IMR-90 (cell line): ENCODE measurements at regions of chr15 and their contacts with region 1.

Region 1: GRCh38 chr15:82999905-83000671 is 11.4 kb downstream of the C15orf40 start:
- DNase-seq: peak; percentile 69
- ATAC-seq: peak; percentile 90
- H3K4me3 ChIP-seq: peak overlapping the region; percentile 24; the same call in 1 of the 2 replicates
- H3K27ac ChIP-seq: peak overlapping the region; percentile 48
- H3K4me1 ChIP-seq: peaks cover 2% of the 10 kb centered on the region; the same call in 1 of the 2 replicates
- H3K27me3 ChIP-seq: no peaks in the 10 kb centered on the region
- CTCF ChIP-seq: peak; percentile 66
- POLR2A ChIP-seq: no peak
- RAD21 ChIP-seq: peak; percentile 80

Region 2: GRCh38 chr15:82530606-82531379 is 469.3 kb before region 1 on chr15:
- CTCF ChIA-PET with region 1: no interaction called
- POLR2A ChIA-PET with region 1: no interaction called
- dilution Hi-C with region 1: no loop called
- in situ Hi-C with region 1: loop called (anchors 10 kb)
- intact Hi-C with region 1: no loop called
- DNase-seq: peak; percentile 56
- ATAC-seq: peak; percentile 98
- H3K4me3 ChIP-seq: no peak overlapping the region
- H3K27ac ChIP-seq: no peak overlapping the region
- H3K4me1 ChIP-seq: no peaks in the 10 kb centered on the region; the same call in 1 of the 2 replicates
- H3K27me3 ChIP-seq: no peaks in the 10 kb centered on the region
- CTCF ChIP-seq: peak; percentile 52
- POLR2A ChIP-seq: no peak
- RAD21 ChIP-seq: 0 out of 2 replicates have a peak, but pooled peaks have one; percentile 31

Region 3: DNA sequence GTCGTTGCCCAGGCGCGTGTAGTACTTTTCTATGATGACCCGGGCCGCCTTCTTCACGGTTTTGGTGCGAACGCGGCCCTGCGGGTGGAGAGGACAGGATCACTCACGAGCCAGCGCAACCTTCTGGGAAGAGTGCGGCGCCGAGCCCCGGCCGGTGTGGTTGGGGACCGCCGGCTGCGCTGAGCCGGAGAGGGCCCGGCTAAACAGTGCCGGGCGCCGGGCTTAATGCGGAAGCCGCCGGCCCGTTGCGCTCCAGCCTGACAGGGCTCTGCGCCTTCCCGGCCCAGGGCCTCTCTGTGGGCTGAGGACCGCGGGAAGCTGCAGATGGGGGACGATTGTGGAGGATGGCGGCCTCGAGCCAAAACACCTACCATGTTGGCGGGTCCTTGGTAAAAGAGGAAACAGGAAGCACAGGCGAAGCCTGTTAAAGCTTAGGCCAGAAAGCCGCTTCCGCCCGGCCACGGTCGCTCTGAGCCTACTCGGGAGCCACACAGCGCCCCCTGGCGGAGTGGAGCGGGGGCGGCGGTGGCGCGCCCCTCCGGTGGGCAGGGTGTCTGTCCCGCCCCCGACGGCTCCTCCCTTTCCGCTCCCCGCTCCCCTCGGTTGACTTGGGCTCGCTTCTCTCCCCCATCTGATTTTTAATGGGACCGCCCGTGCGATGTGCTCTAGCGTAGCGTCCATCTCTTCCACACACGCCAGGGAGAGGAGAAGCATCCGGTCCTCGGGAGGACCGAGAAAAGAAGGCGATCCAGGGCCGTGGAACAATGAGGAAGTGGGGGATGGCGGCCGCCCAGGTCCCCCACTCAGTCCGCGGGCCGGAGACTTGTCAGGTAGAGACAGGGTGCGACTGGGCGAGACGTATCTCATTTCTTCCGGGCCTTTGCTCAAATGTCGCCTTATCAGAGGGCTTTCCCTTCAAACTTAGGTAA is 459.8 kb before region 1 on chr15 and contains the start of gene RPS17:
- CTCF ChIA-PET with region 1: no interaction called
- POLR2A ChIA-PET with region 1: interaction called, 3 read pairs
- dilution Hi-C with region 1: no loop called
- in situ Hi-C with region 1: loop called (anchors 10 kb)
- intact Hi-C with region 1: loop called (anchors 2 kb)
- DNase-seq: peak; percentile 93
- ATAC-seq: peak; percentile 95
- H3K4me3 ChIP-seq: peak within 1 kb of the TSS; percentile 99
- H3K27ac ChIP-seq: peak within 1 kb of the TSS; percentile 89
- H3K4me1 ChIP-seq: peaks cover 6% of the 10 kb centered on the region
- H3K27me3 ChIP-seq: no peaks in the 10 kb centered on the region
- CTCF ChIP-seq: peak; percentile 99
- POLR2A ChIP-seq: peak; percentile 99
- RAD21 ChIP-seq: peak; percentile 43
- total RNA-seq, gene RPS17: 2,617 and 3,477 TPM in 2 replicates

Region 4: DNA sequence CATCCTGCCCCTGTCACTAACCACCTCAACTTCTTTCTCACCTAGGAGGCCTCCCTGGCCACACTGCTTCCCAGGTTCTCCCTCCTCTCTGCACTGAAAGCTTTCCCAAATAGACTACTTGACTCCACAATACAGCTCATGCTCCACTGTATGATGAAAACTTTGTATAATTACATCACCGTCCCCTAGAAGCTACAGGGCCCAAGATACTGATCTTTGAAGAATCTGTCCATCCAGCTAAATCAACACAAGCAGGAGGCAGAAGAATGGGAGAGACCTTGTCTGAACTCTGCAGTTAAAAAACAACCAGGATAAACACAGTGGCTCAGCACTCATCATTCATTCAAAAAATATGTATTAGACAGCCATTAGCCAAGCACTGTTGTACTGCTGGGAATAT is 433.4 kb before region 1 on chr15:
- CTCF ChIA-PET with region 1: no interaction called
- POLR2A ChIA-PET with region 1: no interaction called
- dilution Hi-C with region 1: no loop called
- in situ Hi-C with region 1: loop called (anchors 10 kb)
- intact Hi-C with region 1: no loop called
- DNase-seq: peak; percentile 81
- ATAC-seq: peak; percentile 35
- H3K4me3 ChIP-seq: no peak overlapping the region
- H3K27ac ChIP-seq: no peak overlapping the region
- H3K4me1 ChIP-seq: peaks cover 9% of the 10 kb centered on the region
- H3K27me3 ChIP-seq: no peaks in the 10 kb centered on the region
- CTCF ChIP-seq: no peak
- POLR2A ChIP-seq: no peak
- RAD21 ChIP-seq: no peak

Region 5: GRCh38 chr15:82647045-82647834 is 352.8 kb before region 1 on chr15 and contains the start of gene CPEB1:
- CTCF ChIA-PET with region 1: no interaction called
- POLR2A ChIA-PET with region 1: no interaction called
- dilution Hi-C with region 1: no loop called
- in situ Hi-C with region 1: no loop called
- intact Hi-C with region 1: loop called (anchors 10 kb)
- DNase-seq: peak; percentile 30
- ATAC-seq: peak; percentile 76
- H3K4me3 ChIP-seq: peak within 1 kb of the TSS; percentile 63
- H3K27ac ChIP-seq: no peak within 1 kb of the TSS
- H3K4me1 ChIP-seq: no peaks in the 10 kb centered on the region
- H3K27me3 ChIP-seq: peaks cover 48% of the 10 kb centered on the region
- CTCF ChIP-seq: peak; percentile 16; the same call in 1 of the 2 replicates
- POLR2A ChIP-seq: no peak
- RAD21 ChIP-seq: no peak
- total RNA-seq, gene CPEB1: 6.9 and 12.5 TPM in 2 replicates

Region 6: GRCh38 chr15:82809404-82810060 is 190.6 kb before region 1 on chr15 and contains the start of gene WHAMM:
- CTCF ChIA-PET with region 1: no interaction called
- POLR2A ChIA-PET with region 1: no interaction called
- dilution Hi-C with region 1: no loop called
- in situ Hi-C with region 1: no loop called
- intact Hi-C with region 1: loop called (anchors 5 kb)
- DNase-seq: peak; percentile 98
- ATAC-seq: peak; percentile 96
- H3K4me3 ChIP-seq: peak within 1 kb of the TSS; percentile 88
- H3K27ac ChIP-seq: peak within 1 kb of the TSS; percentile 92
- H3K4me1 ChIP-seq: no peaks in the 10 kb centered on the region
- H3K27me3 ChIP-seq: no peaks in the 10 kb centered on the region
- CTCF ChIP-seq: 0 out of 2 replicates have a peak, but pooled peaks have one; percentile 24
- POLR2A ChIP-seq: peak; percentile 78
- RAD21 ChIP-seq: 0 out of 2 replicates have a peak, but pooled peaks have one; percentile 5
- total RNA-seq, gene WHAMM: 1.4 and 1.9 TPM in 2 replicates

Region 7: DNA sequence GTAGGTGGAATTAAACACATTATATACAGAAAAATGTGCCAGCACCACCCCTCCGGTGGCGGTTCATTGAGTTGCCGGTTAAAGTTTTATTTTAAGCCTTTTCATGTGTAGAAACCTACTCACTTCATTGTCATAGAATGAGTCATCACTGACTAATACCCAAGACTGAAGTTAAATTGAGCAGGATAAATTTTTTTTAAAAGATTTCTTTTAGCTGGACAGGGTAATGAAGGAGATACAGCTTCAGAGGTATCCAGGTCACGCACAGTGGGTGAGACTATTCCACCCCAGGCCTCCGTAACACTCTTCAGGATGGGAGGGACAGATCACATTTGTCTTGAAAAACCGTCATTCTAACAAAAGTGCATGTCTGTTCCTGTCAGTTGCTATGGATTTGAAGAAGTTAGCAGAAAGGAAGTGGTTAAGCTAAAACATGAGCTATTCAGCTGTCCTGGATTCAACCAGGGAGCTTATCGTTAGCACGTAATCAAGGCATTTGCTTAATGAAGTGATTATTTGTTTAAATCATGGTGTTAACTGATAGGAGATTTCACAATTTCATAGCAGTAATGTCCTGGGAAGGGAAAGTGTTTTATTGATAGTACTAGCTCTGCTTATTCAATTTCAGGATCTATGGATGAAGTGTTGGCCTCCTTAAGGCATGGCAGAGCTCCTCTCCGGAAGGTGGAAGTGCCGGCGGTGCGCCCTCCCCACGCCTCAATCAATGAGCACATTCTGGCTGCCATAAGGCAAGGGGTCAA is 167.3 kb before region 1 on chr15:
- CTCF ChIA-PET with region 1: no interaction called
- POLR2A ChIA-PET with region 1: no interaction called
- dilution Hi-C with region 1: no loop called
- in situ Hi-C with region 1: no loop called
- intact Hi-C with region 1: loop called (anchors 5 kb)
- DNase-seq: peak; percentile 93
- ATAC-seq: peak; percentile 93
- H3K4me3 ChIP-seq: no peak overlapping the region
- H3K27ac ChIP-seq: peak overlapping the region; percentile 85
- H3K4me1 ChIP-seq: peaks cover 10% of the 10 kb centered on the region
- H3K27me3 ChIP-seq: no peaks in the 10 kb centered on the region
- CTCF ChIP-seq: no peak
- POLR2A ChIP-seq: no peak
- RAD21 ChIP-seq: no peak